ENCODE measurements at regions of chr16 and their contacts with region 1.

Region 1: DNA sequence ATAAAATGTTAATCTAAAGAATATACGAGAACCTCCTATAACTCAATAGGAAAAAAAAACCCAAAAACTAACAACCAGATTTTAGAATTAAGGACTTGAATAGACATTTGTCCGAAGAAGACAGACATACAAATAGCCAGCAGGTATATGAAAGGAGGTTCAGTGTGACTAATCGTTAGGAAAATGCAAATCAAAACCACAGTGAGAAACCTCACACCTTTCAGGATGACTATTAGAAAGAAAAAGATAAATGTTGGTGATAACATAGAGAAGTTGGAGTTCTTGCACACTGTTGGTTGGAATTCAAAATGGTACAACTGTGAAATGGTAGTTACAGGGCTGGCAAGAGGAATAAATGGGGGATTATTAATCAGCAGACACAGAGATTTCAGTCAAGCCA is 339.0 kb downstream of the TMEM114 start:
- DNase-seq: no peak
- H3K4me3 ChIP-seq: no peak overlapping the region
- H3K27ac ChIP-seq: no peak overlapping the region
- H3K4me1 ChIP-seq: no peaks in the 10 kb centered on the region
- H3K27me3 ChIP-seq: no peaks in the 10 kb centered on the region
- CTCF ChIP-seq: no peak
- POLR2A ChIP-seq: no peak

Region 2: GRCh38 chr16:8342276-8342675 is 91.0 kb after region 1 on chr16:
- intact Hi-C with region 1: loop called (anchors 5 kb)
- DNase-seq: no peak
- H3K4me3 ChIP-seq: no peak overlapping the region
- H3K27ac ChIP-seq: no peak overlapping the region
- H3K4me1 ChIP-seq: no peaks in the 10 kb centered on the region
- H3K27me3 ChIP-seq: no peaks in the 10 kb centered on the region
- CTCF ChIP-seq: no peak
- POLR2A ChIP-seq: no peak